ENCODE measurements at regions of chr20 and their contacts with region 1.

Region 1: DNA sequence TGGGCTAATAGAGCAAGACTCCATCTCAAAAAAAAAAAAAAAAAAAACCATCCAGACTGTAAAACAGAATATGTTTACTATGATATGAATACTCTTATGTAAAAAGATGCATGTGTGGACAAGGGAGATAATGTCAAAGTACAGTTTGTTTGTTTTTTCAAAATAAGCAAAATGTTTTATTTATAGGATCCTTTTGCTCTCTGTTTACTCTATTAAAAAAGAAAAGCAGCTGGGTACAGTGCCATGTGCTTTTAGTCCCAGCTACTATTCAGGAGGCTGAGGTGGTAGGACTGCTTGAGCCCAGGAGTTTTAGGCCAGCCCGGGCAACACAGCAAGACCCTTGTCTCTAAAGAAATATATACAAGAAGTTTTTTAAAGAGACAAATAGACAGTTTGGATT is 38.1 kb downstream of the UQCC1 start:
- DNase-seq: no peak
- H3K4me3 ChIP-seq: no peak overlapping the region
- H3K4me3 Mint-ChIP-seq: no peak overlapping the region
- H3K27ac ChIP-seq: no peak overlapping the region
- H3K27ac Mint-ChIP-seq: peak overlapping the region in 1 of 7 donors; percentile 48
- H3K4me1 ChIP-seq: no peaks in the 10 kb centered on the region
- H3K4me1 Mint-ChIP-seq: no peaks in the 10 kb centered on the region
- H3K27me3 ChIP-seq: no peaks in the 10 kb centered on the region
- H3K27me3 Mint-ChIP-seq: peaks cover 0 to 4% (median 0%) of the 10 kb centered on the region in 3 donors
- CTCF ChIP-seq: no peak

Region 2: GRCh38 chr20:35329435-35330139 is 44.1 kb before region 1 on chr20:
- intact Hi-C with region 1: loop called in 1 of 2 experiments (anchors 2 kb)
- DNase-seq: no peak
- H3K4me3 ChIP-seq: no peak overlapping the region
- H3K4me3 Mint-ChIP-seq: no peak overlapping the region
- H3K27ac ChIP-seq: no peak overlapping the region
- H3K27ac Mint-ChIP-seq: peak overlapping the region in 3 of 7 donors; percentile 21 to 56 (median 51)
- H3K4me1 ChIP-seq: peaks cover 20 to 25% of the 10 kb centered on the region in 2 donors
- H3K4me1 Mint-ChIP-seq: peaks cover 28% of the 10 kb centered on the region
- H3K27me3 ChIP-seq: no peaks in the 10 kb centered on the region
- H3K27me3 Mint-ChIP-seq: no peaks in the 10 kb centered on the region
- CTCF ChIP-seq: peak; percentile 33

Region 3: DNA sequence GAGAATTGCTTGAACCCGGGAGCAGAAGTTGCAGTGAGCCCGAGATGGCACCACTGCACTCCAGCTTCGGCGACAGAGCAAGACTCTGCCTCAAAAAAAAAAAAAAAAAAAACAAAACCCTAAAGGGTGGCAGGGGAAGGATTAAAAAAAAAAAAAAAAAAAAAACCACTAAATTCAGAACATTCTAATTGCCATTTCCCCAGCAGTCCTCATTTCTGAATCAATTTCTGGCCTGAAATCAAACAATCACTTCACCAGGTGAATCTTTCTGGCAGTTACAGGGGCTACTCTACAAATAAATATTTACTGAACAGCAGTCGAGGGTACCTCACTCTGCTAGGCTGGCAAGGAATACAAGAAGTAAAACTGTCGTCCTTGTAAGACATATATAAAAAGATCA is 37.0 kb after region 1 on chr20:
- intact Hi-C with region 1: no loop called
- DNase-seq: no peak
- H3K4me3 ChIP-seq: peak overlapping the region in 1 of 3 experiments; percentile 93
- H3K4me3 Mint-ChIP-seq: no peak overlapping the region
- H3K27ac ChIP-seq: no peak overlapping the region
- H3K27ac Mint-ChIP-seq: no peak overlapping the region
- H3K4me1 ChIP-seq: peaks cover 11 to 19% of the 10 kb centered on the region in 2 donors
- H3K4me1 Mint-ChIP-seq: peaks cover 15% of the 10 kb centered on the region
- H3K27me3 ChIP-seq: no peaks in the 10 kb centered on the region
- H3K27me3 Mint-ChIP-seq: peaks cover 3% of the 10 kb centered on the region in 3 donors
- CTCF ChIP-seq: no peak

Measured in CD14-positive monocyte (primary cell).